Activated T-helper 1 cell treated with anti-CD3 and anti-CD28 coated beads, Interleukin-12 subunit alpha, Interleukin-12 subunit beta, Interleukin-2, Interleukin-4 antibody, amounts not matched to agents 30 ng/mL and 10 ng/mL and 1 ng/mL, durations not matched to agents 14 hours and 24 hours and 36 hours (primary cell): ENCODE measurements at regions of chr1 and their contacts with region 1.

Region 1: GRCh38 chr1:234875953-234876855 is 252.4 kb downstream of the TOMM20 start:
- DNase-seq: no peak
- H3K4me3 Mint-ChIP-seq: peak overlapping the region; percentile 11
- H3K27ac Mint-ChIP-seq: peak overlapping the region; percentile 88
- H3K4me1 Mint-ChIP-seq: peaks cover 55% of the 10 kb centered on the region
- H3K27me3 Mint-ChIP-seq: no peaks in the 10 kb centered on the region

Region 2: DNA sequence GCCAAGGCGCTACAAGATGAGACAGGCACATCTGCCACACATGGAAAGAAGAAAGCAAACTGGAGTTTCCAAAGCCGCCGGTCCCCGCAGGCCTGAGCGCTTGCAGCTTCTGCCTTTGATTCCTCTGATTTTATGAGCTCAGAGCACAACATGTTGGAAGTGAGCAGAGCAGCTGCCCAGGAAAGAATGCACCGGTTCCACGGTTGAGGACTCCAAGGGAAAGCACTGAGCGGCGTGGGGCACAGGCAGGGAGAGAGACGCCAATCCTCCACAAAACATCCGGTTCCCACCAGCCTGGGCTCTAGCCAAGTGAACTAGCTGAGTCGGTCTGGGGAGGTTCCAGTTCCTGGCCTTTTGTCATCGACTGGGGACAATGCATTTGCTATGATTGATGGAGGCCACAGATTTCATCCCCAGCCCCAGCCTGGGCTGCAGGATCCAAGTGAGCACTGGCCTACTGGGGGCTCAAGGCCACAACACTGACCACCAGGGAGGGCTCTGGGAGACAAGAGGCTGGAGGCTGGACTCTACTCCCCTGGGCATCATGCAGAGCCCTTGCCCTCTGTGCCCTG is 13.2 kb before region 1 on chr1:
- intact Hi-C with region 1: loop called (anchors 1 kb)
- DNase-seq: no peak
- H3K4me3 Mint-ChIP-seq: no peak overlapping the region
- H3K27ac Mint-ChIP-seq: peak overlapping the region; percentile 9
- H3K4me1 Mint-ChIP-seq: peaks cover 54% of the 10 kb centered on the region
- H3K27me3 Mint-ChIP-seq: no peaks in the 10 kb centered on the region